Heart right ventricle (tissue), 16 donors: ENCODE measurements at regions of chr2 and their contacts with region 1.

Region 1: GRCh38 chr2:23926750-23927571 is at the start of gene ATAD2B:
- DNase-seq: peak; percentile 89 to 94
- ATAC-seq: peak; percentile 93 to 96 (median 95)
- H3K4me3 ChIP-seq: peak within 1 kb of the TSS; percentile 79 to 99 (median 92)
- H3K27ac ChIP-seq: peak within 1 kb of the TSS; percentile 86 to 100 (median 99)
- H3K4me1 ChIP-seq: peaks cover 2 to 54% (median 39%) of the 10 kb centered on the region in 9 donors
- H3K27me3 ChIP-seq: no peaks in the 10 kb centered on the region
- CTCF ChIP-seq: peak; percentile 65 to 96 (median 92)
- total RNA-seq, gene ATAD2B: 6.2 to 11.8 (median 8.8) TPM

Region 2: GRCh38 chr2:23384551-23385349 is 542.2 kb before region 1 on chr2 and contains the start of gene KLHL29:
- intact Hi-C with region 1: no loop called
- DNase-seq: peak; percentile 85 to 89
- ATAC-seq: peak; percentile 39 to 88 (median 79)
- H3K4me3 ChIP-seq: peak within 1 kb of the TSS; percentile 37 to 80 (median 64)
- H3K27ac ChIP-seq: peak within 1 kb of the TSS in 6 of 10 donors; percentile 40 to 66 (median 52)
- H3K4me1 ChIP-seq: peaks cover 0 to 33% (median 20%) of the 10 kb centered on the region in 9 donors
- H3K27me3 ChIP-seq: peaks cover 9 to 78% (median 51%) of the 10 kb centered on the region in 7 donors
- CTCF ChIP-seq: no peak
- total RNA-seq, gene KLHL29: 0.71 to 1.5 (median 1.0) TPM

Region 3: DNA sequence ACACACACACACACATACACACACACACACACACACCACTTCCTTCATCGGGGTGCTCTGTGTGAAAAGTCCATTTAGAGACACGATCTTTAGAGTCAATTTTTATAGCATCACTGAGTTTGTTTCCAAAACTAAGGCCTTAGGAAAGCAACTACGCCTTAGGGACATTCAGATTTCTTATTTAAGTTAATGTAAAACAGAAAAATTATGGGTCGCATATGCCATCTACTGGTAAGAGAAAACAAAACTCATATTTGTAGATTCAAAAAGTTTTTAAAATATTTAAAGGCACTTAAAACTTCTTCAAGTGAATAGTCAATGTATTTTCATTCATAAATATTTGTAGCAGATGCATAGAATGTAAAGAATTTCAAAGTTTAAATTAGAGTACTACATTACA is 166.2 kb before region 1 on chr2:
- intact Hi-C with region 1: no loop called
- DNase-seq: no peak
- ATAC-seq: no peak
- H3K4me3 ChIP-seq: no peak overlapping the region
- H3K27ac ChIP-seq: peak overlapping the region in 1 of 10 donors; percentile 44
- H3K4me1 ChIP-seq: peaks cover 0 to 30% (median 13%) of the 10 kb centered on the region in 9 donors
- H3K27me3 ChIP-seq: no peaks in the 10 kb centered on the region
- CTCF ChIP-seq: peak in 6 of 9 donors; percentile 23 to 54 (median 41)

Region 4: DNA sequence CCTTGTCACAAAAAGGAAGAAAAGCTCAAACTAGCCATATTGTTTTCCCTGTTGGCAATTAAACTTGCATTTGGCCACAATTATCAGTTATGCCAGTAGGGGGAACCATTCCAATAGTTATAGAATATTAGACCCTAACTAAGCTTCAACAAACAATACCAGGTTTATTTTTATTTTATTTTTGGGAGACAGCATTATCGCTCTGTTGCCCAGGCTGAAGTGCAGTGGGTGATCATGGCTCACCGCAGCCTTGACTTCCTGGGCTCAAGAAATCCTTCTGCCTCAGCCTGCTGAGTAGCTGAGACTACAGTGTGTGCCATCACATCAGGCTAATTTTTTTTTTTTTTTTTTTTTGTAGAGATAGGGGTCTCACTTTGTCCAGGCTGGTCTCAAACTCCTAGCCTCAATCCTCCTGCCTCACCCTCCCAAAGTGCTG is 102.2 kb before region 1 on chr2:
- intact Hi-C with region 1: loop called in 1 of 10 experiments (anchors 10 kb)
- DNase-seq: peak in 1 of 2 donors; percentile 18
- ATAC-seq: peak in 4 of 8 donors; percentile 16 to 52 (median 28)
- H3K4me3 ChIP-seq: no peak overlapping the region
- H3K27ac ChIP-seq: no peak overlapping the region
- H3K4me1 ChIP-seq: peaks cover 0 to 7% (median 0%) of the 10 kb centered on the region in 9 donors
- H3K27me3 ChIP-seq: no peaks in the 10 kb centered on the region
- CTCF ChIP-seq: peak; percentile 25 to 81 (median 70)

Region 5: DNA sequence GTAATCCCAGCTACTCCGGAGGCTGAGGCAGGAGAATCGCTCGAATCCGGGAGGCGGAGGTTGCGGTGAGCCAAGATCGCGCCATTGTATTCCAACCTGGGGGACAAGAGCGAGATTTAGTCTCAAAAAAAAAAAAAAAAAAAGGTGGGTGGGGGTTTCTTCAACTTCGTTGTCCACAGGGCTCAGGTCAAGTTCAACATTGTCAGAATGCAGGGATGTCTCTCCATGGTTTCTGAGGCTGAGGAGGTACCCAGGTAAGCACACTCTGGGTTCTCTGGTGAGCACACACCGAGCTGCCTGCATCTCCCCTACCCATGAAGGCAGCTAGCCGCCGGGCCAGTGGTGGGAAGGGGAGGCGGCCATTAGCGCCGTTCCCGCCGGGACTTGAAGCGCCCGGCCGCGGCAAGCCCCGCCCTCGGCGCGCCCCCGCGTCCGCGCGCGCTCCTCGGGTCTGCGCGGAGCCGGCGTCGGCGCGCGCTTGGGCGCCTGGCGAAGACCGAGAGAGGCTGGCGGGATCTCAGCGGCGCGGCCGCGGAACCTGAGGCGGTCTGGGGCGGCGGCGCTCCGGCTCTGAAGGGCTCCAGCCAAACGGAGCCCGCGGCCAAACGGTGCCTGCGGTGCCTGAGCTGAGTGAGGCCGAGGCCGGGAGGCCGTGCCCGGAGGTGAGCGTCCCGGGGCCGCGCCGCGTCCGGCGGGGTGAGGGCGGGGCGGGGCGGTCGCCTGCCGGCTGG is 13.2 kb after region 1 on chr2 and contains the start of gene UBXN2A:
- intact Hi-C with region 1: loop called in 3 of 10 experiments (anchors 1 to 2 kb)
- DNase-seq: peak; percentile 71 to 82
- ATAC-seq: peak; percentile 90 to 97 (median 96)
- H3K4me3 ChIP-seq: peak within 1 kb of the TSS; percentile 71 to 99 (median 92)
- H3K27ac ChIP-seq: peak within 1 kb of the TSS; percentile 84 to 97 (median 95)
- H3K4me1 ChIP-seq: peaks cover 3 to 34% (median 24%) of the 10 kb centered on the region in 9 donors
- H3K27me3 ChIP-seq: no peaks in the 10 kb centered on the region
- CTCF ChIP-seq: no peak
- total RNA-seq, gene UBXN2A: 18.8 to 23.8 (median 19.8) TPM

Region 6: DNA sequence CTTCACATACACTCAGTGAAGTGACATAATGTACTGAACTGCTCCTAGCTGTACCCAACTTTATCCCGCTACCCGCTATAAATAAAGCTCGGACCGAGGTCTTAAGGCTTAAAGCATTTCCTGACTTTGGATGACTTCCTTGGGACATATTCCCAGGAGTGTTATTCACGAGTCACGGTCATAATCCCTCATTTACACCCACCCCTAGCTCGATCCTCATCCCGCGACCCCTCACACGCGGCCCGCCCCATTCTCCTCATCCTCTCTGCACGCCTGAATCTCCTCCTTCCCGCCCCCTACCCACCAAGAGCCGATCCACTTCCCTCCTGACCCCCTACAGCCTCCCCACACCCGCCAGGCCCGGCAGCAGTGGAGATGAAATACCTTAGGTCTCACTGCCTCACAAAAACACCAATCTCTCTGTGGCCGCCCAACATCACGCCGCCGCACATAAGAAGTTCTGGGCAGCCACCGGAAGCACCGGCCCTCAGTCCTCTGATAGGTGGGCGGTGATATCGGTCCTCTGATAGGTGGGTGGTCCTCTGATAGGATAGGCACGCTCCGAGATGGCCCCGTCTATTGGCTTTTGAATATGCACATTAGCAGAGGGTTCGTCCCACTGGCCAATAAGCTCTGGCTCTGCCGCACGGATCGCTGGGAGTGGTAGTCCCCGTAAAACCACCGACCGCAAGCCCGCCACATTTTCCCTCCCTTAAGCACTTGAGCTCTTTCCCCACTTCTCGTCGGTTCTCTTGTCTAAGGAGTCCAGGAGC is 120.2 kb after region 1 on chr2 and contains the start of gene WDCP:
- intact Hi-C with region 1: loop called in 4 of 10 experiments (anchors 2 to 10 kb)
- DNase-seq: peak; percentile 89 to 97
- ATAC-seq: peak; percentile 99 to 100 (median 99)
- H3K4me3 ChIP-seq: peak within 1 kb of the TSS; percentile 39 to 87 (median 74)
- H3K27ac ChIP-seq: peak within 1 kb of the TSS in 9 of 10 donors; percentile 47 to 87 (median 71)
- H3K4me1 ChIP-seq: peaks cover 0 to 38% (median 29%) of the 10 kb centered on the region in 9 donors
- H3K27me3 ChIP-seq: peaks cover 0 to 22% (median 0%) of the 10 kb centered on the region in 7 donors
- CTCF ChIP-seq: no peak
- total RNA-seq, gene WDCP: 4.8 to 10.1 (median 6.2) TPM

Region 7: GRCh38 chr2:24075915-24076848 is 149.2 kb after region 1 on chr2 and contains the start of gene SF3B6:
- intact Hi-C with region 1: loop called in 5 of 10 experiments (anchors 2 to 10 kb)
- DNase-seq: peak; percentile 96 to 97
- ATAC-seq: peak; percentile 95 to 98 (median 97)
- H3K4me3 ChIP-seq: peak within 1 kb of the TSS; percentile 55 to 92 (median 76)
- H3K27ac ChIP-seq: peak within 1 kb of the TSS; percentile 19 to 90 (median 84)
- H3K4me1 ChIP-seq: peaks cover 5 to 24% (median 20%) of the 10 kb centered on the region in 9 donors
- H3K27me3 ChIP-seq: no peaks in the 10 kb centered on the region
- CTCF ChIP-seq: no peak
- total RNA-seq, gene SF3B6: 52.9 to 64.6 (median 57.4) TPM

Region 8: GRCh38 chr2:24084386-24085361 is 157.7 kb after region 1 on chr2 and contains the start of gene TP53I3:
- intact Hi-C with region 1: loop called in 7 of 10 experiments (anchors 2 to 10 kb)
- DNase-seq: peak; percentile 87 to 92
- ATAC-seq: peak; percentile 96 to 99 (median 97)
- H3K4me3 ChIP-seq: peak within 1 kb of the TSS; percentile 50 to 79 (median 66)
- H3K27ac ChIP-seq: peak within 1 kb of the TSS; percentile 55 to 98 (median 90)
- H3K4me1 ChIP-seq: peaks cover 4 to 23% (median 18%) of the 10 kb centered on the region in 9 donors
- H3K27me3 ChIP-seq: no peaks in the 10 kb centered on the region
- CTCF ChIP-seq: peak; percentile 95 to 99 (median 98)
- total RNA-seq, gene TP53I3: 8.7 to 18.3 (median 12.3) TPM